Activated CD8-positive, alpha-beta T cell treated with anti-CD3 and anti-CD28 coated beads, Interleukin-2, amount 10 ng/mL, durations not matched to agents 7 days and 5 days (primary cell): ENCODE measurements at regions of chr5 and their contacts with region 1.

Region 1: DNA sequence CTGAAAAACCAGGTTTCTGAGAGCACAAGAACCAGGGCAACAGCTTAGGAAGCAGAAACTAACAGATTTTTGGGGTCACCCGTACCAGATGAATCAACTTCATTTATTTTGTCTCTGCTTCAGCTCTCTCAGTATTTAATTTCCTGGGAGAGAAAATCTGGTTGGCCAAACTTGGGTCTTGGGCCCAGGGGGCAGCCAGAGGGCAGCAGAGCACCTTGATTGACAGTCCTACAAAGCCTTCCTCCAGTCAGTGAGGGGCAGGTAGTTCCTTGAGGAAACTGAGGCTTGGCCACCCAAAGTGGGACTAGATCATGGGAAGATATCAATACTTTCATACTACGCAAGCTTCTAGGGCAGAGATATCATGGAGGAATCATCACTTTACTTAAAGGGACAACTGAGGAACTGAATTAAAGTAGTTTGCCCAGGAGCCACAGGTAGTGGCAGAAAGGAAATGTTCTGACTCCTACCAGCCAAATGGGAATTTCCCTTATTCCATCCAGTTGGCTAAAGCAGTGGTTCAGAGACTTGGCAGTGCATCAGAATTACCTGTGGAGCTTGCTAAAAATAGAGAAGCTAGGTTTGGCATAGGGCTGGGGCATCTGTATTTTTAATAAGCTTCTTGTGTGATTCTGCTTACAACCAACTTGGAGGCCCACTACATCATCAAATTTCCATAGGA is 21.5 kb upstream of the ARHGAP26 start:
- DNase-seq: peak; percentile 62
- ATAC-seq: peak; percentile 65
- H3K4me3 Mint-ChIP-seq: no peak overlapping the region
- H3K27ac Mint-ChIP-seq: no peak overlapping the region
- H3K4me1 Mint-ChIP-seq: peaks cover 10% of the 10 kb centered on the region
- H3K27me3 Mint-ChIP-seq: peaks cover 4% of the 10 kb centered on the region

Region 2: GRCh38 chr5:142763701-142764100 is 15.0 kb after region 1 on chr5:
- CTCF ChIA-PET with region 1: interaction called, 76 read pairs
- POLR2A ChIA-PET with region 1: interaction called, 3 read pairs
- DNase-seq: no peak
- ATAC-seq: no peak
- H3K4me3 Mint-ChIP-seq: no peak overlapping the region
- H3K27ac Mint-ChIP-seq: no peak overlapping the region
- H3K4me1 Mint-ChIP-seq: peaks cover 2% of the 10 kb centered on the region
- H3K27me3 Mint-ChIP-seq: peaks cover 10% of the 10 kb centered on the region

Region 3: GRCh38 chr5:142783601-142784341 is 35.1 kb after region 1 on chr5:
- CTCF ChIA-PET with region 1: interaction called, 18 read pairs
- POLR2A ChIA-PET with region 1: no interaction called
- DNase-seq: peak; percentile 67
- ATAC-seq: peak; percentile 81
- H3K4me3 Mint-ChIP-seq: peak overlapping the region; percentile 21
- H3K27ac Mint-ChIP-seq: peak overlapping the region; percentile 56
- H3K4me1 Mint-ChIP-seq: peaks cover 64% of the 10 kb centered on the region
- H3K27me3 Mint-ChIP-seq: no peaks in the 10 kb centered on the region

Region 4: DNA sequence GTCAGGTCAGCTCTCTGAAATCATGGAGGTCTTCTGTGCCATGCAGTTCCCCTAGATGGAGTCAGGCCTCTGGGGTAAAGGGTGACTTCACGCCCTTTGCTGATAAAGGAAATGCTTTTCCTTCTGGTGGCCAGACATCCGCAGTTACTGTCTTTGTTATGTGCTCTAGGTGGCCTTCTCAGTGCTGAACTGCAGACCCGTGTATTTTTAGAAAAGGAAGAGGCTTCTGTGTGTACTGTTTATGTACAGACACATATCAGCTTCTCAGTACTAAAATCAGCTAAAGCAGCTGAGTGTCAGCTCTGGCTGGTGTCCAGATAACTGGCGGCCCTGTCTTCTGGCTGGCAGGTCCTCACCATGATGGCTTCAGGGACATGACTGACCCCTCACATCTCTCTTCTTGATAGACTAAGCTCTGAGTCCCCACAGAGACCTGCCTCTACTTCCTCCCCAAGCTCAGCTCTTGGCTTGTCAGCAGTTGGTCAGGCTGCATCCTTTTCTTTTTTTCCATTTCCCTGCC is 96.8 kb after region 1 on chr5:
- CTCF ChIA-PET with region 1: interaction called, 15 read pairs
- POLR2A ChIA-PET with region 1: no interaction called
- DNase-seq: peak; percentile 48
- ATAC-seq: peak; percentile 81
- H3K4me3 Mint-ChIP-seq: peak overlapping the region; percentile 42
- H3K27ac Mint-ChIP-seq: peak overlapping the region; percentile 90
- H3K4me1 Mint-ChIP-seq: peaks cover 48% of the 10 kb centered on the region
- H3K27me3 Mint-ChIP-seq: no peaks in the 10 kb centered on the region

Region 5: GRCh38 chr5:142874537-142874936 is 125.8 kb after region 1 on chr5:
- CTCF ChIA-PET with region 1: interaction called, 445 read pairs
- POLR2A ChIA-PET with region 1: no interaction called
- DNase-seq: no peak
- ATAC-seq: no peak
- H3K4me3 Mint-ChIP-seq: no peak overlapping the region
- H3K27ac Mint-ChIP-seq: no peak overlapping the region
- H3K4me1 Mint-ChIP-seq: peaks cover 3% of the 10 kb centered on the region
- H3K27me3 Mint-ChIP-seq: no peaks in the 10 kb centered on the region